IMR-90 (cell line): ENCODE measurements at regions of chr14 and their contacts with region 1.

Region 1: GRCh38 chr14:24251880-24252288 is 9.5 kb upstream of the TINF2 start:
- DNase-seq: peak; percentile 67
- ATAC-seq: peak; percentile 84
- H3K4me3 ChIP-seq: no peak overlapping the region
- H3K27ac ChIP-seq: peak overlapping the region; percentile 11
- H3K4me1 ChIP-seq: peaks cover 13% of the 10 kb centered on the region
- H3K27me3 ChIP-seq: no peaks in the 10 kb centered on the region
- CTCF ChIP-seq: 0 out of 2 replicates have a peak, but pooled peaks have one; percentile 15
- POLR2A ChIP-seq: no peak
- RAD21 ChIP-seq: no peak

Region 2: GRCh38 chr14:24207104-24207551 is 44.8 kb before region 1 on chr14:
- CTCF ChIA-PET with region 1: no interaction called
- POLR2A ChIA-PET with region 1: no interaction called
- dilution Hi-C with region 1: no loop called
- in situ Hi-C with region 1: no loop called
- intact Hi-C with region 1: no loop called
- DNase-seq: no peak
- ATAC-seq: no peak
- H3K4me3 ChIP-seq: no peak overlapping the region
- H3K27ac ChIP-seq: no peak overlapping the region
- H3K4me1 ChIP-seq: no peaks in the 10 kb centered on the region
- H3K27me3 ChIP-seq: no peaks in the 10 kb centered on the region
- CTCF ChIP-seq: no peak
- POLR2A ChIP-seq: no peak
- RAD21 ChIP-seq: no peak

Region 3: DNA sequence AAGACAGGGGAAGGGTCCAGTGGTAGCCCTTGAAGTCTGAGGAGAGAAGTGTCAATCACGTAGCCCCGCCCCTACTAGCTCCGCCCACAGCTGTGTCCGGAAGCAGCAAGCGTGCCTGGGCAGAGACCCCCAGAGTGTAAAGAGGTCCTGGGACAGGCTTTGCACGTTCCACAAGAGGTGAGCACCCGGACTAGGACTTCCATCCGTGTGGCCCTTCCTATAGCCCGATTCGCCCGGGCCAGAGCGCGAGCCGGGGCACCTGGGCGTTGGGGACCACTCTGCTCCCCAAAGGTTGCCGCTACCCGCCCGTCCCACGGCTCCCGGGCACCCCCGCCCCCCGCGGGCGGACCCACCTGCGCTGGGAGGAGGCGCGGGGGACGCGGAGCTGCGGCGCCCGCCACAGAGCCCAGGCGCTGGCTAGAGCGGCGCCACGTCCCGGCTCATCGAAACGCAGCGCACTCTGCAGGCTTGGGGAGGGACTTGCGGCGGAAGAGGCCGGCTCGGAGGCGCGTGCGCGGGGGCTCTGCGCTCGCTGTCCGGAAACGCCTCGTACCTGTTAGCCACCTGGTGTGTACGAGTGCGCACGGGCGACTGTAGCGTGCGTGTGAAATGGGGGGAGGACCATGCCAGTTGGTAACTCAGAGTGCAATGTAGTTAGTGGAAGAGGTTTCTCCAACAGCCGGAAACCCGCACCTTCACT is 19.4 kb after region 1 on chr14 and contains the start of gene RABGGTA:
- CTCF ChIA-PET with region 1: interaction called, 4 read pairs
- POLR2A ChIA-PET with region 1: interaction called, 3 read pairs
- dilution Hi-C with region 1: no loop called
- in situ Hi-C with region 1: no loop called
- intact Hi-C with region 1: loop called (anchors 2 kb)
- DNase-seq: peak; percentile 83
- ATAC-seq: peak; percentile 100
- H3K4me3 ChIP-seq: peak within 1 kb of the TSS; percentile 63
- H3K27ac ChIP-seq: peak within 1 kb of the TSS; percentile 89
- H3K4me1 ChIP-seq: peaks cover 5% of the 10 kb centered on the region; the same call in 1 of the 2 replicates
- H3K27me3 ChIP-seq: no peaks in the 10 kb centered on the region
- CTCF ChIP-seq: peak; percentile 87
- POLR2A ChIP-seq: peak; percentile 63; the same call in 1 of the 2 replicates
- RAD21 ChIP-seq: 0 out of 2 replicates have a peak, but pooled peaks have one; percentile 30
- total RNA-seq, gene RABGGTA: 25.6 and 27.2 TPM in 2 replicates